CD4-positive, alpha-beta memory T cell (primary cell): ENCODE measurements at regions of chr19 and their contacts with region 1.

Region 1: DNA sequence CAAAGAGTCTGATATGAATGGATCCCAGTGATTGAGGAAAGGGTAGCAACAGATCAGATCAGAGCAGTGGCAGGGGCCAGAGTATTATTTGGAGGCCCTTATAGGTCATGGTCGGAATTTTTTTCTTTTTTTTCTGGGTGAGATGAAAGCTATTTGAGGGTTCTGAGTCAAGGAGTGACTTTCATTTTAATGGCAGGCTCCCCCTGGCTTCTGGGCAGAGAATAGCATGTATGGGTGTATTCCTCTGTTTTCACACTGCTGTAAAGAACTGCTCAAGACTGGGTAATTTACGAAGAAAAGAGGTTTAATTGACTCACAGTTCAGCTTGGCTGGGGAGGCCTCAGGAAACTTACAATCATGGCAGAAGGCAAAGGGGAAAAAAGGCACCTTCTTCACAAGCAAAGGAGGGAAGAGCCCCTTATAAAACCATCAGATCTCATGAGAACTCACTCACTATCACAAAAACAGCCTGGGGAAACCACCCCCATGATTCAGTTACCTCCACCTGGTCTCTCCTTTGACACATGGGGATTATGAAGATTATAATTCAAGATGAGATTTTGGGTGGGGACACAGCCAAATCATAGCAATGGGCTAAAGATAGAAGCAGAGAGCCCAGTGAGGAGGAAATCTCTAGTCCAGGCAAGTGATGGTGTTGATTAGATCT is 3.0 kb upstream of the SLC6A16 start:
- DNase-seq: peak; percentile 37 to 52 (median 43)
- H3K4me3 ChIP-seq: no peak overlapping the region
- H3K4me3 Mint-ChIP-seq: peak overlapping the region in 1 of 8 donors; percentile 34
- H3K27ac ChIP-seq: no peak overlapping the region
- H3K27ac Mint-ChIP-seq: peak overlapping the region in 6 of 7 donors; percentile 13 to 74 (median 22)
- H3K4me1 ChIP-seq: peaks cover 32% of the 10 kb centered on the region
- H3K4me1 Mint-ChIP-seq: peaks cover 30 to 50% (median 40%) of the 10 kb centered on the region in 4 donors
- H3K27me3 ChIP-seq: no peaks in the 10 kb centered on the region
- H3K27me3 Mint-ChIP-seq: no peaks in the 10 kb centered on the region

Region 2: GRCh38 chr19:49224856-49225255 is 103.2 kb before region 1 on chr19:
- CTCF ChIA-PET with region 1: interaction called, 9 read pairs
- POLR2A ChIA-PET with region 1: no interaction called
- intact Hi-C with region 1: loop called (anchors 1 kb)
- DNase-seq: no peak
- H3K4me3 ChIP-seq: no peak overlapping the region
- H3K4me3 Mint-ChIP-seq: no peak overlapping the region
- H3K27ac ChIP-seq: no peak overlapping the region
- H3K27ac Mint-ChIP-seq: peak overlapping the region in 1 of 7 donors; percentile 73
- H3K4me1 ChIP-seq: peaks cover 8% of the 10 kb centered on the region
- H3K4me1 Mint-ChIP-seq: peaks cover 4 to 9% (median 5%) of the 10 kb centered on the region in 4 donors
- H3K27me3 ChIP-seq: no peaks in the 10 kb centered on the region
- H3K27me3 Mint-ChIP-seq: peaks cover 6% of the 10 kb centered on the region in 2 donors

Region 3: DNA sequence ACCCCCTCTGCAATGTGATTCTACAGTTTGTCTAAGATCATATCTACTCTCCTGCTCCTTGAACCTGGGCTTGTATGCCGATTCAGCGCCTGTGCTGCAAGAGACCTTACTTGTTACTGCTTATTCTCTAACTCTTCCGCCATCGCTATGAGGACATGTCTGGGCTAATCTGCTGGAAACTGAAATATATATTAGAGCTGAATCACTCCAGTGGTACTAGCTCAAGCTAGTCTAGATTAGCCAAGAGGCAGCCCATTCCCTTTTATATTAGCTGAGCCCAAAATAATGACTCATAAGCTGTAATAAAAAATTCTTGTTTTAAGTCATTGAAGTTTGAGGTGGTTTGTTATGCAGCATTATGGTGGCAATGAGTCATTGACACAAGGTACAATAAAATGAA is 55.8 kb before region 1 on chr19:
- CTCF ChIA-PET with region 1: interaction called, 4 read pairs
- POLR2A ChIA-PET with region 1: no interaction called
- intact Hi-C with region 1: loop called (anchors 2 kb)
- DNase-seq: no peak
- H3K4me3 ChIP-seq: no peak overlapping the region
- H3K4me3 Mint-ChIP-seq: no peak overlapping the region
- H3K27ac ChIP-seq: no peak overlapping the region
- H3K27ac Mint-ChIP-seq: no peak overlapping the region
- H3K4me1 ChIP-seq: no peaks in the 10 kb centered on the region
- H3K4me1 Mint-ChIP-seq: no peaks in the 10 kb centered on the region
- H3K27me3 ChIP-seq: no peaks in the 10 kb centered on the region
- H3K27me3 Mint-ChIP-seq: peaks cover 3 to 11% of the 10 kb centered on the region in 2 donors

Region 4: DNA sequence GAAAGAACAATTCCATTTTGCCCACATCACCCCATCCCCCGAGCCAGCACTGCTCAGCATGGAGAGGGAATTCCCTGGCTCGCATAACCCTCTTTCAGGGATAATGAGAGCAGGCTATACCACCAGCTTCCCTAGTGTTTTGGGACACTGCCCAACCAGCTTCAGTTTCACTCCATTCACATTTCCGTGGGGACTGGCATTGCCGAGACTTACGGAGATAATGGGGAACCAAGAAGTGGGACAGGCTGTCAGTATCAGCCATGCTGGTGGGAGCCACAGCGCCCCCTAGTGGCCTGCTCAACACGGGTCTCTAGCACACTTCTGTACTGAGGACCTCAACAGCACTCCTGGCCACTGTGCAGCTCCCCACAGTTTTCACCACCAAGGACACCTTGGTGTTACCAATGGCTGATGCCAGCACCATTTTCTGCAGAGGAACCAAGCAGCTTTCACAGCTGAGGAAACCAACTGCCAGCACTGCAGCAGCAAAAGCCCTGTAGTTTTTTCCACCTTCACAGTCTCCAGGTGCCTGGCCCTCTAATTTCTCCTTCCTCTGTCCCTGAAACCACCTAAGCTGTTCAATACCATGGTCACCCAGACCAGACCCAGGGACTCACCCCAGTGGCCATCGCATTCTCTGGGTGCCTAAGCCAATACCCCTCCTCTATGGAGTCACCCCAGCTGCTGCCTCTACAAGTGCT is 26.7 kb before region 1 on chr19:
- CTCF ChIA-PET with region 1: interaction called, 21 read pairs
- POLR2A ChIA-PET with region 1: no interaction called
- intact Hi-C with region 1: no loop called
- DNase-seq: peak; percentile 66 to 78 (median 70)
- H3K4me3 ChIP-seq: no peak overlapping the region
- H3K4me3 Mint-ChIP-seq: peak overlapping the region in 2 of 8 donors; percentile 53 to 57
- H3K27ac ChIP-seq: no peak overlapping the region
- H3K27ac Mint-ChIP-seq: peak overlapping the region in 1 of 7 donors; percentile 22
- H3K4me1 ChIP-seq: peaks cover 4% of the 10 kb centered on the region
- H3K4me1 Mint-ChIP-seq: peaks cover 0 to 7% (median 2%) of the 10 kb centered on the region in 4 donors
- H3K27me3 ChIP-seq: no peaks in the 10 kb centered on the region
- H3K27me3 Mint-ChIP-seq: peaks cover 0 to 1% of the 10 kb centered on the region in 2 donors

Region 5: GRCh38 chr19:49421039-49421877 is 93.2 kb after region 1 on chr19:
- CTCF ChIA-PET with region 1: no interaction called
- POLR2A ChIA-PET with region 1: no interaction called
- intact Hi-C with region 1: no loop called
- DNase-seq: peak in 1 of 5 donors; percentile 24
- H3K4me3 ChIP-seq: no peak overlapping the region
- H3K4me3 Mint-ChIP-seq: peak overlapping the region in 7 of 8 donors; percentile 49 to 87 (median 57)
- H3K27ac ChIP-seq: no peak overlapping the region
- H3K27ac Mint-ChIP-seq: peak overlapping the region in 2 of 7 donors; percentile 67 to 79
- H3K4me1 ChIP-seq: peaks cover 41% of the 10 kb centered on the region
- H3K4me1 Mint-ChIP-seq: peaks cover 28 to 65% (median 44%) of the 10 kb centered on the region in 4 donors
- H3K27me3 ChIP-seq: peaks cover 53% of the 10 kb centered on the region
- H3K27me3 Mint-ChIP-seq: peaks cover 60 to 64% of the 10 kb centered on the region in 2 donors